Sigmoid colon (tissue), 7 donors: ENCODE measurements at regions of chr2 and their contacts with region 1.

Region 1: DNA sequence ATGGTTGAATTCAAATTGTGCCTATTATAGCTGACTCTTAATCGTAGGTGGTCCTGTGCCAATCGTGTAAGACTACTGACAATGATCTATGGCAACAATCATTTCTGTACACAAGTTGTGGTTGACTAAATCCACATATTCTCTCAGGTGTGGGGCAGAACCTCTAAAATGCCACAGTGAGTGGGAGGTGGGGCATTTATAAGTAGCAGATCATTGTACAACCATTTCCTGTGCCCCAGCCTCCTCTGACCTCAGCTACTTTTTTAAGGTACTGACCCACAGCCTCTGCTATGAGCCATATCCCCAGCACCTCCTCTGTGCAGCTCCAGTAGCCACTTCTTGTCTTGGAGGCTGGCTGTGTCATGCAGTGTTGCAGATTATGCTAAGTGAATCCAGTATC is 48.6 kb upstream of the RAPH1 start:
- DNase-seq: no peak
- H3K4me3 ChIP-seq: no peak overlapping the region
- H3K27ac ChIP-seq: peak overlapping the region in 1 of 4 donors; percentile 74
- H3K4me1 ChIP-seq: peaks cover 0 to 31% (median 27%) of the 10 kb centered on the region in 4 donors
- H3K27me3 ChIP-seq: no peaks in the 10 kb centered on the region
- CTCF ChIP-seq: no peak
- EP300 ChIP-seq: no peak
- POLR2A ChIP-seq: no peak

Region 2: DNA sequence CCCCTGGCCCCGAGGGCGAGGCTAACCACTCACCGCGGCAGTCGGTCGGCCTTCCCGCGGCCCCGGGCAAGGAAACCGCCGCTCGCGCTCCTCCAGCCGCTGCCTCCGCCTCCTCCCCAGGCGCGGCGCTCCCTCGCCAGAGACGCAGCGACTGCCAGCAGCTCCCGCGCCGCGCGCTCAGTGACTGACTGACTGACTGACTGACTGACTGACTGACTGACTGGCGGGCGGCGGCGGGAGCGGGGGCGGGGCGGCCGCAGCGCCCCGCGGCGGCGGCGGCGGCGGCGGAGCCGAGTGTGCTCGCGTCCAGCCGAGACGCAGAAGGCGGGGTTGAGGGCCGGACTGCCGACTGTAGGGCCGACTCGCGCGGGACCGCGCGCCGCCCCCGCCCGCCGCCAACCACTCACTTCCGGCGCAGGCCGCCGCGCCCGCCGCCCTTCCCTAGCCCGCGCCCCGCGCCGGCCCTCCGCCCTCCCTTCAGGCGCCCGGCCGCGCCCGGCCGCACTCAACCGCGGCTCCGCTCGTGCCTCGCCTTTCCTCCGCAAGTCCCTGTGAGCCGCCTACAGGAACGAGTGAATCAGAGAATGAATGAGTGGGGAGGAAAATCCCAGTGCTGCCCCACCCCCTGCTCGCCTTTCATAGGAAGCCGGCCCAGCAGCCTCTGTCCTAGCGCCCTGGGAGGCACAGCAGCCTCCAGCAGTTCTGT is 48.5 kb before region 1 on chr2 and contains the start of gene RAPH1:
- intact Hi-C with region 1: loop called (anchors 5 kb)
- DNase-seq: peak; percentile 91
- H3K4me3 ChIP-seq: peak within 1 kb of the TSS; percentile 76 to 94 (median 88)
- H3K27ac ChIP-seq: peak within 1 kb of the TSS; percentile 88 to 97 (median 93)
- H3K4me1 ChIP-seq: peaks cover 0 to 28% (median 19%) of the 10 kb centered on the region in 4 donors
- H3K27me3 ChIP-seq: no peaks in the 10 kb centered on the region
- CTCF ChIP-seq: no peak
- EP300 ChIP-seq: no peak
- POLR2A ChIP-seq: peak in 1 of 2 donors; percentile 50
- total RNA-seq, gene RAPH1: 11.8 to 19.9 (median 14.4) TPM